Motor neuron (in vitro differentiated cells): ENCODE measurements at regions of chr1 and their contacts with region 1.

Region 1: GRCh38 chr1:14113841-14114567 is 414.0 kb downstream of the PRDM2 start:
- ATAC-seq: peak; percentile 72 to 98 (median 94)
- H3K4me3 ChIP-seq: no peak overlapping the region
- H3K27ac ChIP-seq: no peak overlapping the region
- H3K4me1 ChIP-seq: peaks cover 2 to 10% of the 10 kb centered on the region in 2 donors

Region 2: DNA sequence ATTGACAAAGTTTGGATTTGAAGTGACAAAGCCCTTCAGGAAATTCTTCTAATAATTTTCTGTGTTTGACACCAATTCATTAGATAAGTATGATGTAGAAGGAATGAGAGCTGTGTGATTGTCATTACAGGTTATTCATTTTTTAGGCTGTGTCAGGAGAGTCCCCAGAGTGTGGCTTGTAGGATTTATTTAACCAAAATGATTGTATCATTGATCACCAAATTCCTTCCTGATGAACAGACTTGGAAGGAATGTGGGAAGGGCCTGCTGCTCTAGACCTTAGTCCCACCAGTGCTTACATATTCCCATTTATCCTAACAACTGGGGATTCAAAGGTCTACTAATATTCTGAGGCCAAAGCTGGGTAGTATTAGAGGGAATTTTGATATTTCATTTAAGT is 101.1 kb after region 1 on chr1:
- in situ Hi-C with region 1: no loop called
- ATAC-seq: peak in 1 of 8 experiments; percentile 48
- H3K4me3 ChIP-seq: no peak overlapping the region
- H3K27ac ChIP-seq: no peak overlapping the region
- H3K4me1 ChIP-seq: peaks cover 0 to 4% of the 10 kb centered on the region in 2 donors

Region 3: GRCh38 chr1:14366091-14367018 is 252.4 kb after region 1 on chr1:
- in situ Hi-C with region 1: loop called in 1 of 9 experiments (anchors 25 kb)
- ATAC-seq: peak in 3 of 8 experiments; percentile 39 to 92 (median 79)
- H3K4me3 ChIP-seq: no peak overlapping the region
- H3K27ac ChIP-seq: no peak overlapping the region
- H3K4me1 ChIP-seq: peaks cover 19 to 27% of the 10 kb centered on the region in 2 donors

Region 4: GRCh38 chr1:14598497-14599172 is 484.6 kb after region 1 on chr1 and contains the start of gene KAZN:
- in situ Hi-C with region 1: loop called in 1 of 9 experiments (anchors 25 kb)
- ATAC-seq: peak; percentile 48 to 78 (median 70)
- H3K4me3 ChIP-seq: peak within 1 kb of the TSS; percentile 73 to 90 (median 89)
- H3K27ac ChIP-seq: peak within 1 kb of the TSS; percentile 93 to 99
- H3K4me1 ChIP-seq: peaks cover 25 to 41% of the 10 kb centered on the region in 2 donors
- total RNA-seq, gene KAZN: 16.9 to 31.4 (median 21.4) TPM

Region 5: GRCh38 chr1:14755518-14756252 is 641.7 kb after region 1 on chr1:
- in situ Hi-C with region 1: loop called in 1 of 9 experiments (anchors 25 kb)
- ATAC-seq: peak in 5 of 8 experiments; percentile 28 to 42 (median 41)
- H3K4me3 ChIP-seq: no peak overlapping the region
- H3K27ac ChIP-seq: no peak overlapping the region
- H3K4me1 ChIP-seq: peaks cover 36 to 38% of the 10 kb centered on the region in 2 donors

Region 6: DNA sequence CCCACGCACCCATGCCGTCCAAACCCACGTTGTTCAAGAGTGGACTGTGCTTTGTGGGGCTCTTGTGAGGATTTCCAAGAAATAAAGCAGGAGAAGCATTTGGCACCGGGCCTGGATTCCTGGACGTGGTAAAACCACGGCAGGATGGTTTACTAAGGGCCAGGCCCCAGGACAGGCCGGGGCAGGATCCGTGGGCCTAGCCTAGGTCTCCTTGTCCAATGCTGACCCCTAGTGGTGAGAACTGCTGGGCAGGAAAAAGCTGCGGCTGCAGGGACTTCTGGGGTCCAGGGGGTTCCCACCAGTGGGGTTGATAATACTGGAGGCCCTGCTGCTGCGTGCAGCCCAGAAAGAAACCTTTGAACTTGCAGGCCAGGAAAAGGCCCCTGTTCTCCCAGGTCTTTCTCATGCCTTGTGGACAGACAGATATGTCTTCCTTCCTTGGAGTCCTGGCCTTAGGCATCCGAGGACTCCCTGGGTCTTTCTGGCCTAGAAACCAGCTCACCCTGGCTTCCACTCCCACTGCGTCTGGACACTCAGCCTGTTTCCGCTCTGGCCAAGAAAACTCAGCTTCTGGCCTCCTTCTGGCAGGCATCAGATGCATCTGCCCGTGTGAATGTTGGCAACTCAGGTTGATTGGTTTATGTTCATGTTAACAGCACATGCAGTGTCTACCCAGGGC is 932.6 kb after region 1 on chr1:
- in situ Hi-C with region 1: loop called in 4 of 9 experiments (anchors 25 kb)
- ATAC-seq: peak; percentile 83 to 92 (median 88)
- H3K4me3 ChIP-seq: no peak overlapping the region
- H3K27ac ChIP-seq: no peak overlapping the region
- H3K4me1 ChIP-seq: peaks cover 0 to 14% of the 10 kb centered on the region in 2 donors